ENCODE measurements at regions of chr4 and their contacts with region 1.

Region 1: DNA sequence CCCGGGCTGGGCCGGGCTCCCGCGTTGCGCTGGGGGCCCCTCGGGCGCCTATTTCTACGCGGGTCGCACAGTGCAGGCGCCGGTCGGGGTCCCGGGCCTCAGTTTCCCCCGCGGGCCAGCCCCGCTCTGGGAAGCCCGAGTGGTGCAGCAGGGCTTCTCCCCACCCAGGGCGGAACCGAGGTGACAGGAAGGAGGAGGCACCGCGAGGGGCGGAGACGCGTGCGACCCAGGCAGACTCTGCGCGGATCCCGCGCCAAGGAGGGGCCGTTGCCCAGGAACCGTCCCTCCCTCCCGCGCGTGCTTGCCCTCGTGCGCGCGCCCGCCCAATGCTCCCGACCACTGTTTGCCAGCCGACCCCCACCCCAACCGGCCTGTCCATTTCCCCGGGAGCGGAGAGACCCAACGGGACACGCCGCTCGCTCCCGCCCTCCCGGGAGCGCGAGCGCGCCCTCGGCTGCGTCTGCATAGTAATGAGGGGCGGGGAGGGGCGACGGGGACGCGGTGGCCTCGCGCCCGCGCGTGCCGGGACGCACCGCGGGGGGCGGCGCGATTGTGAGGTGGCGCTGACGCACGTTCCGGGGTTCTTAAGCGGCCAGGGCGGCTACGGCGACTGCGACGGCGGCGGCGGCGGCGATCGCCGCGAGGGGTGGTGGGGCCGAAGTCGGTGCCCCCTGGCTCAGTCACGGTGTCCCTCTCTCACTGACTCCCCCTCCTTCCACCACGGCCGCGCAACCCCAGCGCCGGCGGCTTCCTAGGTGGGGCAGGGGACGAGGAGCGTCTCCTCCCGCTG is at the start of gene CPEB2:
- DNase-seq: peak; percentile 95 to 97
- ATAC-seq: peak; percentile 84 to 91 (median 86)
- H3K4me3 ChIP-seq: peak within 1 kb of the TSS; percentile 85
- H3K27ac ChIP-seq: peak within 1 kb of the TSS; percentile 99
- H3K4me1 ChIP-seq: peaks cover 22% of the 10 kb centered on the region
- H3K27me3 ChIP-seq: no peaks in the 10 kb centered on the region
- CTCF ChIP-seq: no peak
- total RNA-seq, gene CPEB2: 5.6 to 14.0 (median 8.5) TPM

Region 2: GRCh38 chr4:13627606-13628301 is 1374.3 kb before region 1 on chr4 and contains the start of gene BOD1L1:
- intact Hi-C with region 1: loop called in 1 of 2 experiments (anchors 2 kb)
- DNase-seq: peak; percentile 89 to 93
- ATAC-seq: peak; percentile 96 to 99 (median 98)
- H3K4me3 ChIP-seq: peak within 1 kb of the TSS; percentile 83
- H3K27ac ChIP-seq: peak within 1 kb of the TSS; percentile 99
- H3K4me1 ChIP-seq: peaks cover 27% of the 10 kb centered on the region
- H3K27me3 ChIP-seq: no peaks in the 10 kb centered on the region
- CTCF ChIP-seq: peak; percentile 45
- total RNA-seq, gene BOD1L1: 13.7 to 19.3 (median 15.6) TPM

Region 3: GRCh38 chr4:14566518-14566917 is 435.5 kb before region 1 on chr4:
- intact Hi-C with region 1: no loop called
- DNase-seq: no peak
- ATAC-seq: no peak
- H3K4me3 ChIP-seq: no peak overlapping the region
- H3K27ac ChIP-seq: no peak overlapping the region
- H3K4me1 ChIP-seq: no peaks in the 10 kb centered on the region
- H3K27me3 ChIP-seq: no peaks in the 10 kb centered on the region
- CTCF ChIP-seq: no peak

Region 4: GRCh38 chr4:14749910-14750309 is 252.2 kb before region 1 on chr4:
- intact Hi-C with region 1: loop called in 1 of 2 experiments (anchors 10 kb)
- DNase-seq: peak in 1 of 2 donors; percentile 13
- ATAC-seq: peak in 1 of 4 donors; percentile 60
- H3K4me3 ChIP-seq: no peak overlapping the region
- H3K27ac ChIP-seq: no peak overlapping the region
- H3K4me1 ChIP-seq: no peaks in the 10 kb centered on the region
- H3K27me3 ChIP-seq: no peaks in the 10 kb centered on the region
- CTCF ChIP-seq: peak; percentile 34

Region 5: DNA sequence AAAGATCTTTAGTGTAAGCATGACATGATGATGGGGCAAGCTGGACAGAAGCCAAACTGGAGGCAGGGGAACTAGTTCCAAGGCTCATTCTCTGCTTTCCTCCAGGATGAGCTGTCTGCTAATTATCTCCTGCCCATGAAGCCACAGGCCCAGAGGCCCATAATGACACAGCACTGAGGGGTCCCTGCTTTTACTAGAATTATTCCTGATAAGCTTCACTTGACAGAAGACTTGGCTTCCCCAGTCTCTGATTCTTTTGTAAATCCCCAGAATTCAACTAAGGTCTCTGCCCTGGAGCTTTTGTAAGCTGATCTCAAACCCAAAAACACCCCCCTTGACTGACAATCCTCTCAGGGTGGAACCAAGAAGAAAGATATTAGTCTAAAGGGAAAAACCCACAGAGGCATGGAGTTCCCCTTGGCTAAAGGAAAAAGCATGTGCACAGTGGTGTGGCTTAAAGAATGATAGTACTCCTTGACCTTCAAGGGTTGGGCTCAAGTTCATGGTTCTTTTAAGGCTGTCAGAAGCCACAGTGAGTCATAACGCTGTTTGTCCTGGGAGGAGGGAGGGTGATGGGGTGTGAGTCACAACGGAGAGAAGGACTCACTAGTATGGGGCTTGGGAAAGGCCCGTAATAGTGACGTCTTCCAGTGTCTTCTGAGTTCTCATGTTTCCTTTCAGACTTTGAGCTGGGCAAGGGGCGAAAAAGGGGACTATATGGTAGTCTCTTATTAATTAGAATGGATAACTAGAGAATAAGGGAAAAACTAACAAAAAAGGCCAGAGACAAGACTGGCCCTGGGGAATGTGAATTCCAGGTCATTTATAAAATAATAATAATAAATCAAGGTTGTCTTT is 145.8 kb before region 1 on chr4:
- intact Hi-C with region 1: loop called (anchors 5 to 10 kb)
- DNase-seq: peak; percentile 46 to 57
- ATAC-seq: peak; percentile 95 to 97 (median 96)
- H3K4me3 ChIP-seq: no peak overlapping the region
- H3K27ac ChIP-seq: peak overlapping the region; percentile 68
- H3K4me1 ChIP-seq: no peaks in the 10 kb centered on the region
- H3K27me3 ChIP-seq: no peaks in the 10 kb centered on the region
- CTCF ChIP-seq: no peak

Region 6: GRCh38 chr4:15303052-15303641 is 301.1 kb after region 1 on chr4:
- intact Hi-C with region 1: no loop called
- DNase-seq: no peak
- ATAC-seq: no peak
- H3K4me3 ChIP-seq: no peak overlapping the region
- H3K27ac ChIP-seq: no peak overlapping the region
- H3K4me1 ChIP-seq: no peaks in the 10 kb centered on the region
- H3K27me3 ChIP-seq: peaks cover 0 to 2% (median 0%) of the 10 kb centered on the region in 3 donors
- CTCF ChIP-seq: no peak

Region 7: DNA sequence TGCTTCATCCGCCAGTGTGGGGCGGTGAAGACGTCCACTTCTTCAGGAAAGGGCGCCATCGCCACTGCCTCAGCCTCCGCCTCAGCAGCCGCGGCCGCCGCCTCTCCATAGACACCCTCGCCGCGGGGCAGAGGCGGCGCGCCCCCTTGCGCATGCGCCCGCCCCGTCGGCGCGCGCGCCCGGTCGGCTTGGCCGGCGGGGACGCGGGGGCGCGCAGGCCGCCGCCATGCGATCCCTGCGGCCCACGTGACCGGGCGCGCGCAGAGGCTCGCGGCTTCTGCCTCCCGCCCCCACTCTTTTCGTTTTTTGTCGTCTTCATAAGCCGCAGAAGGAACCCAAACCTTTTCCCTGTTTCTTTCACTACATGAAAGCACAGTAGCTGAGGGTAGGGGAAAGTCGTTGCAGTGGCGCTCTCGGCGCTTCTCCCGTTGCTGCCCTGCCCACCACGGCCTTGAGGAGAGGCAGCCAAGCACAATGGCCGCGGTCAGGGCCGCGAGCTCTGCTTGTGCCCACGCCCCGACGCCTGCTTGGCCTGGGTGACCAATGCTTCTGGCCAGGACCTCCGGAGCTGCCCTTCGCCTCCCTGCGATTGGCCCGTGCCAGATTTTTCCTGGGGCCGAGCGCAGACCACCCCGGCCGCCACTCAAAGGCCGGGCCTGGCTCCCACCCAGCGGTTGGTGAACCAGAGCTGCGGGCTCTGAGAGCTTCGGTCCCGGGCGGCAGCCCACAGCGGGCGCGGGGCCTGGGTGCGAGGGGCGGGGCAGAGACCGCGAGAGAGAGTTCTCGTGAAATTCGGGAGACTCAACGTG is 653.4 kb after region 1 on chr4 and contains the start of gene FBXL5:
- intact Hi-C with region 1: loop called (anchors 5 to 10 kb)
- DNase-seq: peak; percentile 84 to 90
- ATAC-seq: peak; percentile 93 to 94 (median 93)
- H3K4me3 ChIP-seq: peak within 1 kb of the TSS; percentile 83
- H3K27ac ChIP-seq: peak within 1 kb of the TSS; percentile 100
- H3K4me1 ChIP-seq: peaks cover 31% of the 10 kb centered on the region
- H3K27me3 ChIP-seq: no peaks in the 10 kb centered on the region
- CTCF ChIP-seq: no peak
- total RNA-seq, gene FBXL5: 53.9 to 91.2 (median 67.9) TPM